Activated B cell treated with CpG ODN at 0.5 μM for 24 hours (primary cell): ENCODE measurements at regions of chr13 and their contacts with region 1.

Region 1: GRCh38 chr13:45047394-45048310 is 58.3 kb downstream of the GPALPP1 start:
- DNase-seq: peak; percentile 51
- ATAC-seq: peak; percentile 81
- H3K4me3 Mint-ChIP-seq: peak overlapping the region; percentile 71
- H3K27ac Mint-ChIP-seq: no peak overlapping the region
- H3K4me1 Mint-ChIP-seq: peaks cover 17% of the 10 kb centered on the region
- H3K27me3 Mint-ChIP-seq: peaks cover 13% of the 10 kb centered on the region
- CTCF ChIP-seq: peak; percentile 72

Region 2: GRCh38 chr13:44458313-44458975 is 589.2 kb before region 1 on chr13:
- CTCF ChIA-PET with region 1: no interaction called
- POLR2A ChIA-PET with region 1: no interaction called
- intact Hi-C with region 1: no loop called
- DNase-seq: no peak
- ATAC-seq: no peak
- H3K4me3 Mint-ChIP-seq: no peak overlapping the region
- H3K27ac Mint-ChIP-seq: no peak overlapping the region
- H3K4me1 Mint-ChIP-seq: peaks cover 2% of the 10 kb centered on the region
- H3K27me3 Mint-ChIP-seq: no peaks in the 10 kb centered on the region
- CTCF ChIP-seq: no peak

Region 3: GRCh38 chr13:45119991-45120864 is 72.6 kb after region 1 on chr13 and contains the start of gene GTF2F2:
- CTCF ChIA-PET with region 1: no interaction called
- POLR2A ChIA-PET with region 1: no interaction called
- intact Hi-C with region 1: loop called (anchors 1 kb)
- DNase-seq: peak; percentile 90
- ATAC-seq: peak; percentile 82
- H3K4me3 Mint-ChIP-seq: no peak within 1 kb of the TSS
- H3K27ac Mint-ChIP-seq: no peak within 1 kb of the TSS
- H3K4me1 Mint-ChIP-seq: peaks cover 9% of the 10 kb centered on the region
- H3K27me3 Mint-ChIP-seq: no peaks in the 10 kb centered on the region
- CTCF ChIP-seq: no peak
- total RNA-seq, gene GTF2F2: 19.4 and 19.8 TPM in 2 replicates

Region 4: GRCh38 chr13:45310341-45311125 is 262.9 kb after region 1 on chr13:
- CTCF ChIA-PET with region 1: interaction called, 63 read pairs
- POLR2A ChIA-PET with region 1: interaction called, 3 read pairs
- intact Hi-C with region 1: loop called (anchors 1 kb)
- DNase-seq: no peak
- ATAC-seq: no peak
- H3K4me3 Mint-ChIP-seq: peak overlapping the region; percentile 83
- H3K27ac Mint-ChIP-seq: no peak overlapping the region
- H3K4me1 Mint-ChIP-seq: peaks cover 18% of the 10 kb centered on the region
- H3K27me3 Mint-ChIP-seq: peaks cover 7% of the 10 kb centered on the region
- CTCF ChIP-seq: no peak

Region 5: DNA sequence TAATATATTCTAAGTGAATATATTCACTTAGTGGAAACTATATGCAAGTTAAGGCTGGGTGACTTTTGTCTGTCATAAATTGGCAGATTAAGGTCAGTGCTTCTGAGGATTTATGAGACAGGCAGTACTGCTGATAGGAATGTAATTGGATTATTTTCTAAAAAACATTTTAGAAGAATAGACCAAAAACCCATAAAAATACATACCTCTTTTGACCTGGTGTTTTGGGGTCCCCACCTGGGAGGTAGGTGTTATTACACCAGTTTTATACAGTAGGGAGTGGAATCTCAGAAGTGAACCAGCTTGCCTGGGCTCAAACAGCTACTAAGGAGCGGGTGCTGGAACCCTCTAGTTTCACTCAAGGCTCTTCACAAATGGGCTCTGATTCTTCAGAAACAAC is 442.4 kb after region 1 on chr13:
- CTCF ChIA-PET with region 1: no interaction called
- POLR2A ChIA-PET with region 1: no interaction called
- intact Hi-C with region 1: loop called (anchors 1 kb)
- DNase-seq: no peak
- ATAC-seq: peak; percentile 47
- H3K4me3 Mint-ChIP-seq: no peak overlapping the region
- H3K27ac Mint-ChIP-seq: no peak overlapping the region
- H3K4me1 Mint-ChIP-seq: no peaks in the 10 kb centered on the region
- H3K27me3 Mint-ChIP-seq: no peaks in the 10 kb centered on the region
- CTCF ChIP-seq: no peak

Region 6: DNA sequence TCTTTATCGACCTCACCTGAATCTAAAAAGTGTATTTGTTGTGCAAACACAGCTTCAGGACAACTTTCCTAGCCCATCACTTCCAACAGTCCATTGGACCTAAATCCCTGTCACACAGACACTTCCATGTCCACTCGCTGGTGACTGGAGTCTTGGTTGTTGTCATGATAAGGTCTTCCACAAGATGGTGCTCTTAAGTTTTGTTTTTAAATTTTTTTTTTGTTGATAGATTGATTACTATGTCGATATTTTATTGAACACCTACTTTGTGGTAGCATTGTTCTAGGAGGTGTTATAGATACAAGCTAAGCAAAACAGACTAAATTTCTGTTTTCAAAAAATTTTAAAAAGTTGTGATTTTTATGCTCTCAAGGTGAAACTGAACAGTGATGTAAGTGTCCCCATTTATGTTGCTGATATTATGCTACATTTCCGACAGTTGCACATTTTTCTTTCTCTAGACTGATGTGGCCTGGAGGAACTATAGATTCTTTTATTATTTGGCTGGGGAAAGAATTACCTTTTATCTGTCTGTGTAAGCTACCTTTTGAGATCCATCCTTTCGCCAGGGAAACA is 576.0 kb after region 1 on chr13:
- CTCF ChIA-PET with region 1: no interaction called
- POLR2A ChIA-PET with region 1: no interaction called
- intact Hi-C with region 1: no loop called
- DNase-seq: no peak
- ATAC-seq: no peak
- H3K4me3 Mint-ChIP-seq: no peak overlapping the region
- H3K27ac Mint-ChIP-seq: no peak overlapping the region
- H3K4me1 Mint-ChIP-seq: no peaks in the 10 kb centered on the region
- H3K27me3 Mint-ChIP-seq: peaks cover 32% of the 10 kb centered on the region
- CTCF ChIP-seq: no peak